Activated naive CD4-positive, alpha-beta T cell treated with anti-CD3 and anti-CD28 coated beads for 36 hours (primary cell): ENCODE measurements at regions of chr17 and their contacts with region 1.

Region 1: DNA sequence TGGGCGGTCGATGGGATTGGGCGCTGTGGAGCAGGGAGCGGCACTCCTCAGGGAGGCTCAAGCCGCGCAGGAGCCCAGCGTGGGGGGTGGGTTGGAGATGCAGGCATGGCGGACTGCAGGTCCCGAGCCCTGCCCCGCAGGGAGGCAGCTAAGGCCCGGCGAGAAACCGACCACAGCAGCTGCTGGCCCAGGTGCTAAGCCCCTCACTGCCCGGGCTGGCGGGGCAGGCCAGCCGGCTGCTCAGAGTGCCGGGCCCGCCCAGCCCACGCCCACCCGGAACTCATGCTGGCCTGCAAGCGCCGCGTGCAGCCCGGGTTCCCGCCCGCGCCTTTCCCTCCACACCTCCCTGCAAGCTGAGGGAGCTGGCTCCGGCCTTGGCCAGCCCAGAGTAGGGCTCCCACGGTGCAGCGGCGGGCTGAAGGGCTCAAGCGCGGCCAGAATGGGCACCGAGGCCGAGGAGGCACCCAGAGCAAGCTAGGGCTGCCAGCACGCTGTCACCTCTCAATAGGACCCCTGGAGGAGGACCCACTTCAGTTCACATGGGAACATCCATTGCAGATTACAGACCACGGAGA is 20.5 kb upstream of the METTL16 start:
- DNase-seq: no peak
- H3K4me3 Mint-ChIP-seq: no peak overlapping the region
- H3K27ac Mint-ChIP-seq: no peak overlapping the region
- H3K4me1 Mint-ChIP-seq: peaks cover 8% of the 10 kb centered on the region
- H3K27me3 Mint-ChIP-seq: no peaks in the 10 kb centered on the region

Region 2: DNA sequence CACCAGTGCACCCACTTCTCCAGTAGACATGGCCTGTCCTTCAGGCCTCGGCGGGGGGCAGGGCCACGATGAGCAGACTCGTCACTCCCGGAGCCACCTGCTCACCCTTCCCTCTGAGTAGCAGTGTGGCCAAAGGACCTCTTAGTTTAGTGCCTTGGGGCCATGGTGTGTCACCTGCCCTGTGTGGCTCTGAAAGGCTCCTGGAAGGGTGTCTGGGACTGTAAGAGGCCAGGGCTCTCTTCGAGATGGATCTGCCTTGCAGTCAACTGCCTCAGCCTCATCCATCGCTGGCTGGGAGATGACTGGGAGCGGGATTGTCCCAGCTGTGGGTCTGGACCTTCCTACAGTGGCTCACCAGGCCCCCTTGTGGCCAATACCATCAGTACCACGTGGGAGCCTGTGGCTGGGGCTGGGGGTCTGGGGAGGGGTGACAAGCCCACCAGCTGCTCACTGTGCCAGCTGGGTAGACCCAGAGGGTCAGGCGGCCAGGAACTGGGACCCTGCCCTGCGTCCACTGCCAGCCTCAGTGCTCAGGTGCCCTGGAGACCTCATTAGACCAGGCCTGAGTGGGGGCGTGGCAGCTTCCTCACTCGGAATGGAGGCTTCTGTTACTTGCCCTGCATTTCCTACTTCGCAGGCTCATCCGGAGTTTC is 397.8 kb after region 1 on chr17:
- CTCF ChIA-PET with region 1: no interaction called
- intact Hi-C with region 1: loop called (anchors 5 kb)
- DNase-seq: peak; percentile 47
- H3K4me3 Mint-ChIP-seq: no peak overlapping the region
- H3K27ac Mint-ChIP-seq: no peak overlapping the region
- H3K4me1 Mint-ChIP-seq: peaks cover 7% of the 10 kb centered on the region
- H3K27me3 Mint-ChIP-seq: no peaks in the 10 kb centered on the region